ENCODE measurements at regions of chr2 and their contacts with region 1.

Region 1: GRCh38 chr2:43219383-43220228 is 6.8 kb downstream of the ZFP36L2 start:
- DNase-seq: no peak
- H3K4me3 ChIP-seq: peak overlapping the region; percentile 22
- CTCF ChIP-seq: no peak

Region 2: GRCh38 chr2:42828487-42829425 is 390.9 kb before region 1 on chr2:
- in situ Hi-C with region 1: loop called (anchors 5 kb)
- DNase-seq: no peak
- H3K4me3 ChIP-seq: no peak overlapping the region
- CTCF ChIP-seq: peak; percentile 90

Region 3: GRCh38 chr2:42964439-42965083 is 255.0 kb before region 1 on chr2:
- in situ Hi-C with region 1: loop called (anchors 5 kb)
- DNase-seq: peak; percentile 94
- H3K4me3 ChIP-seq: no peak overlapping the region
- CTCF ChIP-seq: no peak

Region 4: GRCh38 chr2:43110442-43110871 is 109.1 kb before region 1 on chr2:
- in situ Hi-C with region 1: loop called (anchors 10 kb)
- DNase-seq: peak; percentile 36
- H3K4me3 ChIP-seq: no peak overlapping the region
- CTCF ChIP-seq: no peak

Region 5: GRCh38 chr2:43184339-43184895 is 35.2 kb before region 1 on chr2:
- in situ Hi-C with region 1: loop called (anchors 5 kb)
- DNase-seq: no peak
- H3K4me3 ChIP-seq: no peak overlapping the region
- CTCF ChIP-seq: no peak

Region 6: DNA sequence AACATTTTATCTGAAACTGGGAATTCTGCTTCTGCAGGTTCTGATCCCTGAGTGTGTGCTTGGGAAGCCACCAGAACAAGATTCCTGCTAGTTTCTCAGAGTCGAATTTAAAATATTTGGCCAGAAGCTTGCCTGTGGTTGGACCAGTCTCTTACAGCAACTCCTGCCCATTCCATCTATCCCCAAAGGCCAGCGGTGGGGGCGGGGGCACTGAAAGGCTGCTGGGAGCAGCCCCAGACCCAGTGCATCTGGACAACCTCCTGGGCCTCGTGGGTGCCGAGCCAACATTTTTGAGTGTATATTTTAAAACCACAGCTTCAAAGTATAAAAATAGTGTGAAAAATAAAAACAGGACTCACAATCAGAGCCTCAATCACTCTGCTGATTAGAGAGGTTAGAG is 45.4 kb after region 1 on chr2:
- in situ Hi-C with region 1: no loop called
- DNase-seq: peak; percentile 68
- H3K4me3 ChIP-seq: no peak overlapping the region
- CTCF ChIP-seq: no peak

Region 7: DNA sequence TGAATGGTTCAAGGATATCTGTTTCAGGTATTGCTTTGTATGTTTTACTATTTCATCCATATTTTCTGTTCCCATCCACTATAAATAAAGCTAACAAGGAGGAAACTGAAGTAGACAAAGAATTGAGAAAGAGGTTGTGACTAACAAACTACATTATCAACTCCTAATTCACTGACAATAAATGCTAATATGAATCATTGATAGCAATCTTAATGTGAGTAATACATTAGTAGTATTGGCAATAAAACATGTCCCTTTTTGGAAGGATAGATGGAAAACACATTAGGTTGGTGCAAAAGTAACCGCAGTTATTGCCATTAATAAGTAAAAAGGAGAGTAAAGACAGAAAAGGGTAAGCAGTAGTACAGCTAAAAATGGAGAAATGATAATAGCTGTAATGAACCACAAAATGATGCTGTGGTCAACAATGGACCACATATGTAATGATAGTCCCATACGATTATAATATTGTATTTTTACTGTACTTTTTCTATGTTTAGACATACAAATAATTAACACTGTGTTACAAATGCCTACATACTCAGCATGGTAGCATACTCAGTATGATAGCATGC is 271.5 kb after region 1 on chr2:
- in situ Hi-C with region 1: loop called (anchors 5 kb)
- DNase-seq: no peak
- H3K4me3 ChIP-seq: no peak overlapping the region
- CTCF ChIP-seq: no peak

Measured in astrocyte of the cerebellum (primary cell).